Activated CD8-positive, alpha-beta T cell treated with anti-CD3 and anti-CD28 coated beads, Interleukin-2, amount 10 ng/mL, durations not matched to agents 7 days and 5 days (primary cell): ENCODE measurements at regions of chr1 and their contacts with region 1.

Region 1: DNA sequence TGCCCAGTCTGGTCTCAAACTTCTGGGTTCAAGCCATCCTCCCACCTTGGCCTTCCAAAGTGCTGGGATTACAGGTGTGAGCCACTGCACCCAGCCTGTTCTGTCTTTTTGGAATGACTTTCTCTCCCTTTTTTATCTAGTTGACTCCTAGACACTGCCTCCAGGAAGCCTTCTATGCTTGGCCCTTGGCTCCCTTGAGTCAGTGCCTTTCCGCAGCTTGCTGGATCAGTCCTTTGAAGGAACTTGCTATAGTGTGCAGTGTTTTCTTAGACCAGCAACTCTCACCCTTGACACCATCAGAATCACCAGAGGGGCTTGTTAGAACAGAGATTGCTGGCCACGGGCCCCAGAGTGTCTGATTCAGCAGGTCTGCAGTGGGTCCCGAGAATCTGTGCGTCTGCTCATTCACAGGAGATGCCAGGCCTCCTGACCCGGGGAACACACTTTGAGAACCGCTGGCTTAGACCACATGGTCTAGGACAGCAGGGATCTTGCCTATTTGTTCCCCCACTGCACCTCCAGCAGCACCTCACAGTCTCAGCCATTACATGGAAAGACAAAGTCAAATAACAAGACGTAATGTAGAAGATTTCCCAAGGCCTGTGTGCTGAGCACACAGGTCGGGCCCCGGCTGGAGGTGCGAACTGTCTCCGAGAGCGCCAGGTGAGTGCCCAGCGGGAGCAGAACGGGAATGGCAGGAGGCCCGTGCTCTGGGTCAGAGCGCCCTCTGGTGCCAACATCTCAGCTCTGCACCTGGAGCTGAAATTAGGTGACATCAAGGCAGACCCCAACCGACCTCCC is 27.4 kb upstream of the CTPS1 start:
- DNase-seq: peak; percentile 68
- ATAC-seq: peak; percentile 85
- H3K4me3 Mint-ChIP-seq: no peak overlapping the region
- H3K27ac Mint-ChIP-seq: peak overlapping the region; percentile 55
- H3K4me1 Mint-ChIP-seq: peaks cover 27% of the 10 kb centered on the region
- H3K27me3 Mint-ChIP-seq: peaks cover 31% of the 10 kb centered on the region

Region 2: GRCh38 chr1:40840526-40841323 is 111.4 kb before region 1 on chr1:
- CTCF ChIA-PET with region 1: interaction called, 10 read pairs
- POLR2A ChIA-PET with region 1: no interaction called
- DNase-seq: peak; percentile 83
- ATAC-seq: peak; percentile 90
- H3K4me3 Mint-ChIP-seq: peak overlapping the region; percentile 50
- H3K27ac Mint-ChIP-seq: peak overlapping the region; percentile 91
- H3K4me1 Mint-ChIP-seq: peaks cover 39% of the 10 kb centered on the region
- H3K27me3 Mint-ChIP-seq: peaks cover 2% of the 10 kb centered on the region

Region 3: GRCh38 chr1:40868051-40868794 is 83.9 kb before region 1 on chr1:
- CTCF ChIA-PET with region 1: interaction called, 130 read pairs
- POLR2A ChIA-PET with region 1: interaction called, 9 read pairs
- DNase-seq: no peak
- ATAC-seq: peak; percentile 79
- H3K4me3 Mint-ChIP-seq: no peak overlapping the region
- H3K27ac Mint-ChIP-seq: no peak overlapping the region
- H3K4me1 Mint-ChIP-seq: peaks cover 32% of the 10 kb centered on the region
- H3K27me3 Mint-ChIP-seq: no peaks in the 10 kb centered on the region

Region 4: GRCh38 chr1:40939320-40940059 is 12.7 kb before region 1 on chr1:
- CTCF ChIA-PET with region 1: interaction called, 97 read pairs
- POLR2A ChIA-PET with region 1: no interaction called
- DNase-seq: no peak
- ATAC-seq: no peak
- H3K4me3 Mint-ChIP-seq: no peak overlapping the region
- H3K27ac Mint-ChIP-seq: no peak overlapping the region
- H3K4me1 Mint-ChIP-seq: no peaks in the 10 kb centered on the region
- H3K27me3 Mint-ChIP-seq: peaks cover under 1% of the 10 kb centered on the region

Region 5: DNA sequence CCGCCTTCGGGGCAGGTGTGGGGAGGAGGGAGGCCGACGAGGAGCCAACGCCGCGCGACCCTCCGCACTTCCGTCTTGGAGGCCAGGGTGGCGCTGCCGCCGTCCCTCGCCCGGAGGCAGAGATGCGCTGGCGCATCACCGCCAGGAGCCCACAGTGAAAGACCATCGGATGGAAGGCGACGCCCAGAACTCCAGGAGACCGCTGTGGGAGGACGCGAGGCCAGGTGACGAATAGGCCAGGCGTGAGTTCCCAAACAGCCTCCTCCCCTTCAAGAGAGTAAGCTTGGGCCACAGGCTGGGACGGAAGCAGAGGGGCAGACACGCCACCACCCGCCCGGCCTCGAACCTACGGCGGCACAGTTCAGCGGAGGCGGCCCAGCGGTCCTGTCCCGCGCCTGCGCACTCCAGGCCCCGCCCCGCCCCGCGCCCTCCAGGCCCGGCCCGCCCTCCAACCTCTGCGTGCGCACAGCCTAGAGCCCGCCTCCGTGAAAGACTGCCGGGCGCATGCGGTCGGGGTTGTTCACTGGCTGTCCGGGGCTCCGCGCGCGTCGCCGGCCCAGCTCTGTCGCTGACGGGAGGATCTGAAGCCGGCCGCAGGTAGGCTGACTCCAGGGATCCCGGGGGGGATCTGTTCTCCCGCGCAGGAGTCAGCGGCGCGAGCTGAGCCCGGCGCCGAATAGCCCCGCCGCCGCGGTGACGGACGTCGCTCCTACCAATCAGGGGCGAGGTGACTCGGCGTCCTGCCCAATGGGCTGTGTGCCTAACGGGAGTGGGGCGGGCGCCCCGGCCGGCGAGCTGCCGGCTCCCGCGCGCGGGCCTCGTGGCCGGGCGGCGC is 27.3 kb after region 1 on chr1 and contains the start of gene CTPS1:
- CTCF ChIA-PET with region 1: interaction called, 24 read pairs
- POLR2A ChIA-PET with region 1: interaction called, 4 read pairs
- DNase-seq: peak; percentile 96
- ATAC-seq: peak; percentile 93
- H3K4me3 Mint-ChIP-seq: peak within 1 kb of the TSS; percentile 87
- H3K27ac Mint-ChIP-seq: peak within 1 kb of the TSS; percentile 95
- H3K4me1 Mint-ChIP-seq: peaks cover 48% of the 10 kb centered on the region
- H3K27me3 Mint-ChIP-seq: no peaks in the 10 kb centered on the region
- total RNA-seq, gene CTPS1: 72.6 to 74.5 TPM